Panc1 (cell line): ENCODE measurements at regions of chr1 and their contacts with region 1.

Region 1: DNA sequence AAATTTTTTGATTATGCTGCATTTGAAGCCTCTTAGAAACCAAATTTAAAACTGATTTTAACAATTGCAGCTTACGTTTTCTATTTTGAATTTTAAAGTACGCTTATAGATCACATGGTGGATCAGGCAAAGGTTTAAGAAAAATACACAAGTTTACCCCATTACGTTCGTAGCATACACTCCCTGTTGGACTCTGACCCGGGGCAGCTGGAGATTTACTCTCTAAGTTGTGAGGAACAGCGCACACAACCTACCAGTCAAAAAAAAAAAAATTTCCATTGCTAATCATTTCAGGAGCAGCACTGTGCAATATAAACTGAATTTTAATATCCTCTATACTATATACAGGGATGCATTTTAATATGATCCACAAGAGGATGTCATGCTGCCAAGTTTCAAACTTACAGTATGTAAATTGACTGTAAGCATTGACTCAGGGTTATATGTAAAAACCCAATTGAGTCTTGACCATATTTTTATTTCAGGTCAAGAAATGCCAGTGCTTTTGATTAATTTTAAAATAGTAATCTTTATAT is 20.4 kb downstream of the CSDE1 start:
- DNase-seq: no peak
- ATAC-seq: no peak
- H3K4me3 ChIP-seq: no peak overlapping the region
- H3K27ac ChIP-seq: no peak overlapping the region
- H3K4me1 ChIP-seq: no peaks in the 10 kb centered on the region
- H3K27me3 ChIP-seq: no peaks in the 10 kb centered on the region
- CTCF ChIP-seq: no peak

Region 2: GRCh38 chr1:114861384-114861783 is 124.0 kb after region 1 on chr1:
- CTCF ChIA-PET with region 1: no interaction called
- POLR2A ChIA-PET with region 1: interaction called, 18 read pairs
- in situ Hi-C with region 1: no loop called
- intact Hi-C with region 1: no loop called
- DNase-seq: no peak
- ATAC-seq: no peak
- H3K4me3 ChIP-seq: no peak overlapping the region
- H3K27ac ChIP-seq: no peak overlapping the region
- H3K4me1 ChIP-seq: no peaks in the 10 kb centered on the region
- H3K27me3 ChIP-seq: no peaks in the 10 kb centered on the region
- CTCF ChIP-seq: no peak